OCI-LY7 (cell line): ENCODE measurements at regions of chr17 and their contacts with region 1.

Region 1: GRCh38 chr17:57887161-57887560 is 37.3 kb upstream of the MRPS23 start:
- DNase-seq: no peak
- H3K4me3 ChIP-seq: no peak overlapping the region
- H3K27ac ChIP-seq: no peak overlapping the region
- H3K4me1 ChIP-seq: no peaks in the 10 kb centered on the region
- CTCF ChIP-seq: no peak

Region 2: DNA sequence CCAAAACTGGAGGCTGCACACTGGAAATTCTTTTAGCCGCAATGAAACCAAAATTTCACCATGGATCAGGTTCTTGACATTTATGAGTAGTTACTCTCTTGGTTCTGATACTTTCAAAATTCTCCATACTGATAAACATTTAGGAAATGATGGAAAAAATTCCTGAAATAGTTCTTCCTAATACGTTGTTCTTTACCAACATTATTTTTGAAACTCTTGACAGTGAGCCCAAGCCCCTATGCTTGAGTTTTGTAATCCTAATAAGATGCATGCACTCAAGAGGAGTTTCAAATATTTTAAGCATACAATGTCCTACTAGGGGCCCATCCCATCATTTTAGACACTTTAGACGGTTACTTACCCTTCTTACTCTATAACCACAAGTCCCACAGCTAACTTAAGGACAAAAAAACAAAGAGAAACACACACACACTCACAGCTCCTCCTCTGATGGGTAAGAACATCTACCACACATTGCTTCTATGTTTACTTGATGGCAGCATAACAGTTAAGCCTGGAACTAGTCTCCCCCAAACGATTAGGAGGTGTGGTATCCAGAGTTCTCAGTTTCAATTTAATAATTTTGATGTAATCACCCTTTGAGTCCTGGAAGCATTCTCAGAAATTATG is 97.2 kb after region 1 on chr17:
- CTCF ChIA-PET with region 1: no interaction called
- POLR2A ChIA-PET with region 1: no interaction called
- intact Hi-C with region 1: no loop called
- DNase-seq: no peak
- H3K4me3 ChIP-seq: no peak overlapping the region
- H3K27ac ChIP-seq: no peak overlapping the region
- H3K4me1 ChIP-seq: peaks cover 19% of the 10 kb centered on the region
- CTCF ChIP-seq: no peak

Region 3: DNA sequence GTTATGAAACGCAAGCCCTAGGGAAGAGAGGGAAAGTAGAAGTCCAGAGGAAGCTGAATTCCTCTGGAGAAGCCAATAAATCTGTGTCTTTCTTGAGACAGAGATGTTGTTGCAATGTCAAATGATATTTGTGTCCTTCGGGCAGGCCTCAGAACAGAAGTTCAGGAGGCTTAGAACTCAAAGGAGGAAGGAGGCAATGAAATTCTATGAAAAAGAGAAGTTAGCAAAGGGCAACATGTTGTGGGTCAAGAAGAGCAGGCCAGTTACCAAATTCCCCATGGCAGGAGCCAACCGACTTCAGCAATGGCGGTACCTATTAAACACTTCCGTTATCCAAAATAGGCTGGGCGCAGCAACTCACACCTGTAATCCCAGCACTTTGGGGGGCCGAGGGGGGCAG is 1569.3 kb after region 1 on chr17:
- CTCF ChIA-PET with region 1: no interaction called
- POLR2A ChIA-PET with region 1: interaction called, 10 read pairs
- intact Hi-C with region 1: no loop called
- DNase-seq: no peak
- H3K4me3 ChIP-seq: no peak overlapping the region
- H3K27ac ChIP-seq: no peak overlapping the region
- H3K4me1 ChIP-seq: no peaks in the 10 kb centered on the region
- CTCF ChIP-seq: no peak